IMR-90 (cell line): ENCODE measurements at regions of chr3 and their contacts with region 1.

Region 1: GRCh38 chr3:146621723-146622122 is 16.6 kb upstream of the PLSCR5 start:
- DNase-seq: no peak
- ATAC-seq: no peak
- H3K4me3 ChIP-seq: no peak overlapping the region
- H3K27ac ChIP-seq: no peak overlapping the region
- H3K4me1 ChIP-seq: no peaks in the 10 kb centered on the region
- H3K27me3 ChIP-seq: no peaks in the 10 kb centered on the region
- CTCF ChIP-seq: no peak
- POLR2A ChIP-seq: no peak
- RAD21 ChIP-seq: no peak

Region 2: DNA sequence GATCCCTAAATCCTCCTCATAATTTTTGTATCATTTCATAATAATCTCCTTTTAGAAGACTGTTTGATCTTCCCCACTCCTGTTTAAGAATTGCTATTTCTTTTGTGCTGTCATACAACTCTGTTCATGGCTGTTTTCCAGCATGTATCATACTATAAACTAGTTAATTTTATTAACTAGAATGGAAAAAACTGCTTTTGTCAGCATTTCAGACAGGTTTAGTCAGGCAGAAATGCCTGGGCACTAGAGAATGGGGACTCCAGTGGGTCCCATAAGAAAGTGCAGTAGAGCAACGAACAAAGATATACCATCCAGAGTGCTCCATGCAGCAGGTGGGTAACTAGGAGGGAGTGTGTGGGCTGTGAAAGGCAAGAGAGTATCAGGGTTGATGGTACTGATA is 984.6 kb before region 1 on chr3:
- CTCF ChIA-PET with region 1: no interaction called
- POLR2A ChIA-PET with region 1: no interaction called
- dilution Hi-C with region 1: no loop called
- in situ Hi-C with region 1: no loop called
- intact Hi-C with region 1: loop called (anchors 2 kb)
- DNase-seq: no peak
- ATAC-seq: no peak
- H3K4me3 ChIP-seq: no peak overlapping the region
- H3K27ac ChIP-seq: no peak overlapping the region
- H3K4me1 ChIP-seq: no peaks in the 10 kb centered on the region
- H3K27me3 ChIP-seq: no peaks in the 10 kb centered on the region
- CTCF ChIP-seq: no peak
- POLR2A ChIP-seq: no peak
- RAD21 ChIP-seq: no peak

Region 3: GRCh38 chr3:146834917-146835316 is 213.2 kb after region 1 on chr3:
- CTCF ChIA-PET with region 1: no interaction called
- POLR2A ChIA-PET with region 1: no interaction called
- dilution Hi-C with region 1: no loop called
- in situ Hi-C with region 1: no loop called
- intact Hi-C with region 1: no loop called
- DNase-seq: no peak
- ATAC-seq: no peak
- H3K4me3 ChIP-seq: no peak overlapping the region
- H3K27ac ChIP-seq: no peak overlapping the region
- H3K4me1 ChIP-seq: no peaks in the 10 kb centered on the region
- H3K27me3 ChIP-seq: no peaks in the 10 kb centered on the region
- CTCF ChIP-seq: no peak
- POLR2A ChIP-seq: no peak
- RAD21 ChIP-seq: no peak

Region 4: GRCh38 chr3:146921693-146922092 is 300.0 kb after region 1 on chr3:
- CTCF ChIA-PET with region 1: no interaction called
- POLR2A ChIA-PET with region 1: no interaction called
- dilution Hi-C with region 1: no loop called
- in situ Hi-C with region 1: no loop called
- intact Hi-C with region 1: no loop called
- DNase-seq: no peak
- ATAC-seq: no peak
- H3K4me3 ChIP-seq: no peak overlapping the region
- H3K27ac ChIP-seq: no peak overlapping the region
- H3K4me1 ChIP-seq: no peaks in the 10 kb centered on the region
- H3K27me3 ChIP-seq: no peaks in the 10 kb centered on the region
- CTCF ChIP-seq: no peak
- POLR2A ChIP-seq: no peak
- RAD21 ChIP-seq: no peak